Naive thymus-derived CD4-positive, alpha-beta T cell (primary cell): ENCODE measurements at regions of chr6 and their contacts with region 1.

Region 1: GRCh38 chr6:111326563-111326962 is 156.5 kb downstream of the REV3L start:
- DNase-seq: no peak
- ATAC-seq: no peak
- H3K4me3 ChIP-seq: no peak overlapping the region
- H3K4me3 Mint-ChIP-seq: no peak overlapping the region
- H3K27ac ChIP-seq: no peak overlapping the region
- H3K27ac Mint-ChIP-seq: no peak overlapping the region
- H3K4me1 ChIP-seq: no peaks in the 10 kb centered on the region
- H3K4me1 Mint-ChIP-seq: no peaks in the 10 kb centered on the region
- H3K27me3 ChIP-seq: no peaks in the 10 kb centered on the region
- H3K27me3 Mint-ChIP-seq: no peaks in the 10 kb centered on the region

Region 2: DNA sequence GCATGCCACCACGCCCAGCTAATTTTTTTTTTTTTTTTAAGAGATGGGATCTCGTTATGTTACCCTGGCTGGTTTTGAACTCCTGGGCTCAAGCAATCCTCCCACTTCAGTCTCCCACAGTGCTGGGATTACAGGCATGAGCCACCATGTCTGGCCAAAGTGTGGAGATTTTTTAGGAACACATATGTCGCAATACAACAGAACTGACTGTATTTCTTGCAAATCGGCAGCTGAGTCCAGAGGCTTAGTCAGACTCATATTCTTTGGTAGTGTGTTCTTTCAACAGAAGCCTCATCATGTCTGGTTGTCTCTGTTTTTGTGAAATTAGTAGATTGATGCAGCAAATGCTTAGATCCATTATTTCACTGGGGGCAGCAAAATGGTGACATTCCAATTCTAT is 1920.4 kb before region 1 on chr6:
- CTCF ChIA-PET with region 1: interaction called, 11 read pairs
- POLR2A ChIA-PET with region 1: no interaction called
- intact Hi-C with region 1: no loop called
- DNase-seq: no peak
- ATAC-seq: no peak
- H3K4me3 ChIP-seq: no peak overlapping the region
- H3K4me3 Mint-ChIP-seq: no peak overlapping the region
- H3K27ac ChIP-seq: no peak overlapping the region
- H3K27ac Mint-ChIP-seq: no peak overlapping the region
- H3K4me1 ChIP-seq: no peaks in the 10 kb centered on the region
- H3K4me1 Mint-ChIP-seq: no peaks in the 10 kb centered on the region
- H3K27me3 ChIP-seq: no peaks in the 10 kb centered on the region
- H3K27me3 Mint-ChIP-seq: peaks cover 0 to 22% (median 0%) of the 10 kb centered on the region in 5 donors

Region 3: GRCh38 chr6:110784610-110784979 is 542.0 kb before region 1 on chr6:
- CTCF ChIA-PET with region 1: no interaction called
- POLR2A ChIA-PET with region 1: no interaction called
- intact Hi-C with region 1: no loop called
- DNase-seq: no peak
- ATAC-seq: no peak
- H3K4me3 ChIP-seq: no peak overlapping the region
- H3K4me3 Mint-ChIP-seq: no peak overlapping the region
- H3K27ac ChIP-seq: no peak overlapping the region
- H3K27ac Mint-ChIP-seq: no peak overlapping the region
- H3K4me1 ChIP-seq: no peaks in the 10 kb centered on the region
- H3K4me1 Mint-ChIP-seq: peaks cover 12 to 41% (median 19%) of the 10 kb centered on the region in 7 donors
- H3K27me3 ChIP-seq: no peaks in the 10 kb centered on the region
- H3K27me3 Mint-ChIP-seq: no peaks in the 10 kb centered on the region

Region 4: GRCh38 chr6:111338843-111339242 is 12.3 kb after region 1 on chr6:
- CTCF ChIA-PET with region 1: no interaction called
- POLR2A ChIA-PET with region 1: no interaction called
- intact Hi-C with region 1: no loop called
- DNase-seq: no peak
- ATAC-seq: no peak
- H3K4me3 ChIP-seq: no peak overlapping the region
- H3K4me3 Mint-ChIP-seq: no peak overlapping the region
- H3K27ac ChIP-seq: no peak overlapping the region
- H3K27ac Mint-ChIP-seq: no peak overlapping the region
- H3K4me1 ChIP-seq: no peaks in the 10 kb centered on the region
- H3K4me1 Mint-ChIP-seq: peaks cover 0 to 15% (median 0%) of the 10 kb centered on the region in 7 donors
- H3K27me3 ChIP-seq: no peaks in the 10 kb centered on the region
- H3K27me3 Mint-ChIP-seq: no peaks in the 10 kb centered on the region

Region 5: DNA sequence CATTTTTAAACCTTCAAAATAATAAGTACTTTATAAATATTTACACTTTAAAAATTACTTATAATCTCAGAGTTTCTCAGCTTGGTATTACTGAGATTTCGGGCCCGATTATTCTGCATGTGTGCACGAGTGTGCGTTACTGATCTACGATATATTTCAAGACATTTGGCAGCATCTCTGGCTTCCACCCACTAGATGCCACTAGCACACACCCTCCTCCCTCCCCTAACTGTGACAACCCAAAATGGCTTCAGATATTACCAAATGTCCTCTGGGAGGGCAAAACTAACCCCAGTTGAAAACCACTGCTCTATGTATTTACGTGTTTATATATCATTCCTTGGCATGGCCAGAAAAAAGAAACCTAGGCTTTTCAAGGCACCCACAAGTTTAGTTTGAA is 450.8 kb after region 1 on chr6:
- CTCF ChIA-PET with region 1: no interaction called
- POLR2A ChIA-PET with region 1: no interaction called
- intact Hi-C with region 1: no loop called
- DNase-seq: peak in 1 of 9 donors; percentile 36
- ATAC-seq: peak; percentile 73
- H3K4me3 ChIP-seq: no peak overlapping the region
- H3K4me3 Mint-ChIP-seq: peak overlapping the region in 2 of 10 donors; percentile 26 to 40
- H3K27ac ChIP-seq: peak overlapping the region; percentile 56
- H3K27ac Mint-ChIP-seq: peak overlapping the region; percentile 2 to 93 (median 81)
- H3K4me1 ChIP-seq: peaks cover 71 to 85% of the 10 kb centered on the region in 2 donors
- H3K4me1 Mint-ChIP-seq: peaks cover 46 to 97% (median 89%) of the 10 kb centered on the region in 7 donors
- H3K27me3 ChIP-seq: no peaks in the 10 kb centered on the region
- H3K27me3 Mint-ChIP-seq: no peaks in the 10 kb centered on the region